Activated naive CD4-positive, alpha-beta T cell treated with anti-CD3 and anti-CD28 coated beads for 36 hours (primary cell): ENCODE measurements at regions of chr11 and their contacts with region 1.

Region 1: GRCh38 chr11:6619004-6619745 is at the start of gene TPP1:
- DNase-seq: peak; percentile 94
- H3K4me3 Mint-ChIP-seq: no peak within 1 kb of the TSS
- H3K27ac Mint-ChIP-seq: no peak within 1 kb of the TSS
- H3K4me1 Mint-ChIP-seq: peaks cover 3% of the 10 kb centered on the region
- H3K27me3 Mint-ChIP-seq: no peaks in the 10 kb centered on the region
- total RNA-seq, gene TPP1: 25.7 to 28.5 TPM

Region 2: GRCh38 chr11:6481012-6481923 is 137.9 kb before region 1 on chr11 and contains the starts of genes ARFIP2 and TIMM10B:
- CTCF ChIA-PET with region 1: no interaction called
- intact Hi-C with region 1: loop called (anchors 1 kb)
- DNase-seq: peak; percentile 99
- H3K4me3 Mint-ChIP-seq: peak within 1 kb of the TSS; percentile 94
- H3K27ac Mint-ChIP-seq: peak within 1 kb of the TSS; percentile 96
- H3K4me1 Mint-ChIP-seq: peaks cover 38% of the 10 kb centered on the region
- H3K27me3 Mint-ChIP-seq: no peaks in the 10 kb centered on the region
- total RNA-seq, gene ARFIP2: 33.5 to 37.9 TPM
- total RNA-seq, gene TIMM10B: 35.1 to 41.7 TPM

Region 3: GRCh38 chr11:6576471-6577373 is 42.5 kb before region 1 on chr11:
- CTCF ChIA-PET with region 1: no interaction called
- intact Hi-C with region 1: no loop called
- DNase-seq: no peak
- H3K4me3 Mint-ChIP-seq: no peak overlapping the region
- H3K27ac Mint-ChIP-seq: no peak overlapping the region
- H3K4me1 Mint-ChIP-seq: peaks cover 3% of the 10 kb centered on the region
- H3K27me3 Mint-ChIP-seq: no peaks in the 10 kb centered on the region

Region 4: DNA sequence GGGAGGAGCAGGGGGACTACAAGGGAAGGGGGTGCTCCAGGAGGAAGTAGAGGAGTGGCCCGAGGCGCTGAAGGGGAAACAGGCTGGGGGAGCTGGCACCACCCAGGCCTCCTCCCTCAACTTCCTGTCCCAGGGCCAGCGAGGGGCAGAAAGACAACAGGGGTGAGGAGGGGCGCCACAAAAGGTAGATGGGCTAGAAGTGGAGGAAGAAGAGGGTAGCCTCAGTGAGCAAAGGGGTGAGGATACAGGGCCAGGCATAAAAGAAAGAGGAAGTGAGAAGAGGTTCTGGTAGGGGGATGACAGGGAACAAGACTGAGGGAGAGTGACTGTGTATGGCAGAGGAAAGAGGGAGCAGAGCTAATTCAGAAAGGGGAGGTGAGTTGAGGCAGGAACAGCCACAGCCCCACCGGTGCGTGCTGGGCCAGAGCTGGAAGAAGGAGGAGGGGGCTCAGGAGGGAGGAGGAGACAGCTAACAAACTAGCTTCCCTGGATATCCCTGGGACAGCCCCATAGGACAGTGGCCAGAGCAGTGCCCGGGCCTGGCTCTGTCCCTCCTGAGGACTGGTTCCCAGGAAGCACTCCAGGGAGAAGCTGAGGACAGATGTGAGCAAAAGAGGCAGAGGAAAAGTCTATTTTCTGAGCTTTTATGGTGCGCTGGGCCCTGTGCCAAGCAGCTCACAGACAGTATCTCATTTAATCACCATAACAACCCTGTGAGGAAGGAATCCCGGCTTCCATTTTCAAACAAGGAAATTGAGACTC is 27.9 kb after region 1 on chr11:
- CTCF ChIA-PET with region 1: interaction called, 5 read pairs
- intact Hi-C with region 1: loop called (anchors 1 kb)
- DNase-seq: peak; percentile 52
- H3K4me3 Mint-ChIP-seq: no peak overlapping the region
- H3K27ac Mint-ChIP-seq: no peak overlapping the region
- H3K4me1 Mint-ChIP-seq: no peaks in the 10 kb centered on the region
- H3K27me3 Mint-ChIP-seq: no peaks in the 10 kb centered on the region

Region 5: GRCh38 chr11:6667733-6668374 is 48.7 kb after region 1 on chr11:
- CTCF ChIA-PET with region 1: interaction called, 5 read pairs
- intact Hi-C with region 1: loop called (anchors 1 kb)
- DNase-seq: peak; percentile 59
- H3K4me3 Mint-ChIP-seq: no peak overlapping the region
- H3K27ac Mint-ChIP-seq: peak overlapping the region; percentile 28
- H3K4me1 Mint-ChIP-seq: peaks cover 63% of the 10 kb centered on the region
- H3K27me3 Mint-ChIP-seq: no peaks in the 10 kb centered on the region

Region 6: DNA sequence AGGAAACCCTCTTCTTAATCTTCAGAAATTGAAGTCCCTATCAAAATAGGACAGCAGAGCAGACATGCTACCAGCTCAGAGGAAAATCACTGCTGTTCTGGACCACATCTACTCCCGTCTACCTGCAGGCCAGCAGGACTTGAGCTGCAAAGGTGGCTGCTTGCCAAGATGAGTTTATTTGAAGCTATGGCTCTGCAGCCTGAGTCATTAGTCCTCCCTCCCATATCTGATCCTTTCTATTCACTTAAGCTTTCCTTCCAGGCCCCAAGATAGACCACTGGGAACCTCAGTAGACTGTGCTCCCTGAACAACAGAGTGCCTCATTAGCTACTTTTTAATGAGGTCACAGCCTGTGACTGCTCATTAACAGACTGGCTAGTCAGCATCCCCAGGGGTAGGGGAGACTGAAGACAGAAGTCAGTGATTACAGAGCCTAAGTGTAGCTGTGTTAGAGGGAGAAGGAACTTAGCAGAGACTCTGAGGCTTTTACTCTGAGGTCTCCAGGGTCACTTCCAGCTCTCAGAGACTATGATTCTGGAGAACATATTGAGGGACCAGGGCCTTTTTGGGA is 236.9 kb after region 1 on chr11:
- CTCF ChIA-PET with region 1: no interaction called
- intact Hi-C with region 1: no loop called
- DNase-seq: no peak
- H3K4me3 Mint-ChIP-seq: no peak overlapping the region
- H3K27ac Mint-ChIP-seq: no peak overlapping the region
- H3K4me1 Mint-ChIP-seq: peaks cover 7% of the 10 kb centered on the region
- H3K27me3 Mint-ChIP-seq: peaks cover 2% of the 10 kb centered on the region